PC-3 (cell line): ENCODE measurements at regions of chr1 and their contacts with region 1.

Region 1: DNA sequence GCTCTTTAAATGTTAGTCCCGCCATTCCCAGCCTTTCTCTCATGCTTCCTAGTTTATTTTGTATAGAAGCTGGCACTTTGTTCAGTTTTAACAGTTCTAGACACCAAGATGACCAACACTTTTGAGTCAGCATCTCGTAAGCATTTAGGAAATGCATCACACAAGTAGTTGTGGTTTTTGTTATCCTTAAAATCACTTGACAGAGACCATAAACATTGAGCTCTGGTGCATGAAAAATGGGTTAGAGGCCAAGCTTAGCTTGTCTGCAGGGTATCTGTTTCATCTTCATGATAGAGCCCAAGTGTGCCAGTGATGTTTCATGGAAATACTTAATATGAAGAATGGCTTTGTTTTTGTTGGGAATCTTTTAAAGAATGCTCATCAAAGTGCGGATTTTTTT is 159.7 kb downstream of the DISP1 start:
- DNase-seq: peak; percentile 91
- ATAC-seq: peak; percentile 95
- H3K4me3 ChIP-seq: no peak overlapping the region
- H3K27ac ChIP-seq: peak overlapping the region; percentile 34
- H3K4me1 ChIP-seq: peaks cover 20% of the 10 kb centered on the region
- H3K27me3 ChIP-seq: no peaks in the 10 kb centered on the region
- CTCF ChIP-seq: no peak

Region 2: DNA sequence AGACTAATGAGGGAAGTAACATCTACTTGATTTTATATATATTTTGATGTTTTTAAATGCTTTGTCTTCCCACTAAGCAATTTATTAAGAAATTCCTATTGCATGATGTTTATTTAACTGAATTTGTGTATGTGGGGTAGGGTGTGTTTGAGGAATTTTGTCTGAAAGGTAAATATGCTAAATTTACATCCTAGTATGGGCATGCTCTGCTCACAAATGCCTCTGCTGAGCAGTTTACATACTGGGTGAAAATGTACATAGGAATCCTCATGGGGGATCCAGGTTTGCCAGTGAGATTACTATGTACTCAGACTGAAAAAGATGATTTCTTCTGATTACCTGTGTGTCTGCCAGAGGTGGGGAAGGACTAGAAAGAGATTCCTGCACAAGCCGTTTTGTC is 33.1 kb before region 1 on chr1:
- CTCF ChIA-PET with region 1: interaction called, 10 read pairs
- POLR2A ChIA-PET with region 1: no interaction called
- intact Hi-C with region 1: no loop called
- DNase-seq: peak; percentile 49
- ATAC-seq: peak; percentile 85
- H3K4me3 ChIP-seq: no peak overlapping the region
- H3K27ac ChIP-seq: no peak overlapping the region
- H3K4me1 ChIP-seq: peaks cover 7% of the 10 kb centered on the region
- H3K27me3 ChIP-seq: no peaks in the 10 kb centered on the region
- CTCF ChIP-seq: no peak

Region 3: DNA sequence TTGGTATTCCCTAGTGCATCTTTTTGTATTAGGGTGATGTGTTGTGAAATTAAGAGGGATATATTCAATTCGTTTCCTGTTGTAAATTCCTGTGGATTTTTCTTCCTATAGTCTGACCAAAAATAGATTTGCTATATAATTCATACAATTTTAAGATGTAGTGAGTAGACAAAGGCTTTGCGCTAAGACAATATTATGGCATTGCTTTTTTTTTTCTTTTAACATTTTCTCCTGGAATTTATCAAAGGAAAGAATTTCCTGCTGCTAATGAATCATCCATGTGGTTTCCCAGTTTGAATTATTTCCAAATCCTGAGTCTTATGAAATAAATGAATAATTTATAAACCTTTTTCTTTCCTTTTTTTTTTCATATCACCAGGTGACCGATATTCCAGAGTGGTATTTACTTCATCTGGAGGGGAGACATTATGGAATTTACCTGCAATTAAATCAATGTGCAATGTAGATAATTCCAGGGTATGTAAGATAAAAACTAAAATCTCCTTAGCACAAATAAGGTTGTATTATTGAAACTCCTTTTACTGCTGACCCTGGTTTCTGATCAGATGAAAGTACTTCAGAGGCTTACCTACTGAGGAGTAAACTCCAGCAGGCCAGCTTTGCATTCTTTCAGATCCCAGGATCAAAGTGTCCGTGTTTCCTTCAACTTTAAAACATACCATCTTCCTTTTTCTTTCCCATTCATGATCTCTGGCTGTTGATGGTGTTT is 20.2 kb after region 1 on chr1:
- CTCF ChIA-PET with region 1: no interaction called
- POLR2A ChIA-PET with region 1: no interaction called
- intact Hi-C with region 1: loop called (anchors 2 kb)
- DNase-seq: peak; percentile 85
- ATAC-seq: peak; percentile 86
- H3K4me3 ChIP-seq: no peak overlapping the region
- H3K27ac ChIP-seq: no peak overlapping the region
- H3K4me1 ChIP-seq: peaks cover 19% of the 10 kb centered on the region
- H3K27me3 ChIP-seq: no peaks in the 10 kb centered on the region
- CTCF ChIP-seq: no peak